WTC11 (cell line): ENCODE measurements at regions of chr7 and their contacts with region 1.

Region 1: DNA sequence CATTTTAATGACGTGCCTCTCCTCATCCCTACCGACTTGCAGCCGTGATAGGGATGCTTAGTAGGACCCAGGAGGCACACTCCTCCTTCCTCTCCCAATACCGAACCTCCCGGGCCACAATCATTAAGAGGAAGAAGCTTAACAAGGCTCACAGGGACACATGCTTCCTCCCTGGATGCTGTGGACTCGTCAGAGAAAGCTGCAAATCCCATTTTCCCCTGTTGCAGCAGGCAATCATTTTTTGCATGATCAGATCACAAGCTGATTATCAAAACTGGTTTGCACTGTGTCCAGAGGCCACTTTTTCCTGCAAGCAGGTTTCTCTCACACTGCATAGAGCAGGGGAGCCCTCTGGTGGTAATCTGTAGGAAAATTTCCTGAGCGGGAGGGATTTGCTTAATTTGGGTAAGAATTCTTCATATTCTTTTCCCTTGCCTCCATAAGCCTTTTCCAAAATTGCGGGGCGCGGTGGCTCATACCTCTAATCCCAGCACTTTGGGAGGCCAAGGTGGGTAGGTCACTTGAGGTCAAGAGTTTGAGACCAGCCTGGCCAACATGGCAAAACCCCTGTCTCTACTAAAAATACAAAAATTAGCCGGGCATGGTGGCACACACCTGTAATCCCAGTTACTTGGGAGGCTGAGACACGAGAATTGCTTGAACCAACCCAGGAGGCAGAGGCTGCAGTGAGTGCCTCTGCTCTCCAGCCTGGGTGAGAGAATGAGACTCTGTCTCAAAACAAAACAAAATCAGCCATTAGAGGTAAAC is 16.1 kb upstream of the LAMB4 start:
- DNase-seq: peak; percentile 71
- ATAC-seq: peak; percentile 89
- H3K4me3 Mint-ChIP-seq: no peak overlapping the region
- H3K27ac Mint-ChIP-seq: no peak overlapping the region
- H3K4me1 Mint-ChIP-seq: no peaks in the 10 kb centered on the region
- H3K27me3 Mint-ChIP-seq: no peaks in the 10 kb centered on the region
- CTCF ChIP-seq: peak; percentile 76

Region 2: GRCh38 chr7:107879400-107880035 is 266.7 kb before region 1 on chr7:
- CTCF ChIA-PET with region 1: interaction called, 14 read pairs
- POLR2A ChIA-PET with region 1: interaction called, 3 read pairs
- DNase-seq: no peak
- ATAC-seq: peak; percentile 79
- H3K4me3 Mint-ChIP-seq: no peak overlapping the region
- H3K27ac Mint-ChIP-seq: no peak overlapping the region
- H3K4me1 Mint-ChIP-seq: no peaks in the 10 kb centered on the region; the same call in 1 of the 2 replicates
- H3K27me3 Mint-ChIP-seq: peaks cover 4% of the 10 kb centered on the region; the same call in 1 of the 2 replicates
- CTCF ChIP-seq: peak; percentile 38; the same call in 1 of the 2 replicates

Region 3: DNA sequence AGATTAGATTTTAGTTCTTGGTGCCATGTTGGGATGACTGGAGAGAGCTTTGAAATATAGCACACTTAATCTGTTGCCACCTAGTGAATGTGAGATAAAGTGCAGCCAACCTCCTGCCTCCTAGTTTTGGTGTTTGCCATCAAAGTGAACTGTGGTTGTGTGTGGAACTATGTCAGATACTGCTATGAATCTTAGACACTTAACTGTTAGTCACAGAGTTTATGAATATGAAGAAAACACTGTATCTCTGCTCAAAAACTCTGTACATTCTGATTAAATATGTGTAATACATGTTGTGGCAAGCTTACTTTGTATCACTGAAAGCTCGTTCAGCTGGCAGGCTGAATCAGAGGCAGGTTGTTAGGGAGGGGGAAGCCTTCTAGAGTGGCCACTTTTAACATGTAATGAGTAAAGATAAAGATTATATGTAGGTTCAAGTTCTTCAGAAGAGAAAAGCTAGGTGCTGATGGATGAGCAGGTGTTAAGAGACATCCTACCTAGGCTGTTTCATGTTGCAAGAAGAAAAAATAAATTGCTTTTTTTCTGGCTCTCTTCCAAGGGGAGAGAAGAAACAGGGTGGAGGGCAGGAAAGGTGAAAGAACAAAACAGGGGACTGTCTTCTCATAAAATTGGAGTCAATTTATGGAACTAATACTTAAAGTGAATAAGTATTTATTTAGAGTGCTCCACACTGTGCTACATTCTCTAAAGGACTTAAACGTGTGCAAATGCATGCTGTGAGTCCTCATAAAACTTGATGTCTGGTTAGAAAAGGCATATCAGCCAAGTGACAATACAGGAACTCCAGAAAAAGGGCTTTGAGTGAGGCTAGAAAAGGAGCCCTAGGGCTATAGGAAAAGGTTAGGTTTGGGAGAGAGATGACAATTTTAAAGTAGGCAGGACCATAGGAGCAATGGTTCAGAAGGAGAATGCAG is 129.1 kb before region 1 on chr7:
- CTCF ChIA-PET with region 1: interaction called, 11 read pairs
- POLR2A ChIA-PET with region 1: no interaction called
- DNase-seq: no peak
- ATAC-seq: peak; percentile 90
- H3K4me3 Mint-ChIP-seq: no peak overlapping the region
- H3K27ac Mint-ChIP-seq: no peak overlapping the region
- H3K4me1 Mint-ChIP-seq: peaks cover 3% of the 10 kb centered on the region; the same call in 1 of the 2 replicates
- H3K27me3 Mint-ChIP-seq: no peaks in the 10 kb centered on the region
- CTCF ChIP-seq: 0 out of 2 replicates have a peak, but pooled peaks have one; percentile 16

Region 4: DNA sequence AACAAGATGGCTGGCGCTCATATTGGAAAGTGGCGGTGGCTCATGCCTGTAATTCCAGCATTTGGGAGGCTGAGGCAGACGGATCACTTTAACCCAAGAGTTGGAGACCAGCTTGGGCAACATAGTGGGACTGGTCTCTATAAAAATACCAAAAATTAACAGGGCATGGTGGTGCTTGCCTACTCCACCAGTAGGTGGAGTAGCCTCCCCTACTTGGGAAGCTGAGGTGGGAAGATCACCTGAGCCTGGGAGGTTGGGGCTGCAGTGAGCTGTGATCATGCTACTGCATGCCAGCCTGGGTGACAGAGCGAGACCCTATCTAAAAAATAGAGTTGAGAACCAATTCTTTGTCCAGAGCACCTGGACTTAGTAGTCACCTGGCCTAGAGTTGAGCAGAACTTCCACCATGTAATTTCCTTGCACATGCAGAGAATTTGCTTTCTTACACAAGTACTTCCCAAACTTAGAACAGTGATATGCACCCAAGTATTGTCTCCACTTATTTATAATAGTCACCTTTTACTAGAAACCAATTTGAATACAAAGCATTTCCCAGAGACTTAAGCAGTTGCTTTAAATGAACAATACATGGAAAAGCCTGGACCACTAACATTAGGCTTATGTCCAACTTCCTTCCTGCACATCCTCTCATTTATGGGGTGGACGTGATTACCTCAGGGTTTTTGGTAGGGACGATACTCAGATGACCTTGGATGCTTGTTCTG is 32.0 kb before region 1 on chr7:
- CTCF ChIA-PET with region 1: interaction called, 65 read pairs
- POLR2A ChIA-PET with region 1: interaction called, 3 read pairs
- DNase-seq: peak; percentile 59
- ATAC-seq: peak; percentile 98
- H3K4me3 Mint-ChIP-seq: no peak overlapping the region
- H3K27ac Mint-ChIP-seq: no peak overlapping the region
- H3K4me1 Mint-ChIP-seq: no peaks in the 10 kb centered on the region
- H3K27me3 Mint-ChIP-seq: no peaks in the 10 kb centered on the region
- CTCF ChIP-seq: peak; percentile 69

Region 5: GRCh38 chr7:108132551-108133265 is 13.5 kb before region 1 on chr7:
- CTCF ChIA-PET with region 1: interaction called, 18 read pairs
- POLR2A ChIA-PET with region 1: no interaction called
- DNase-seq: no peak
- ATAC-seq: peak; percentile 74
- H3K4me3 Mint-ChIP-seq: no peak overlapping the region
- H3K27ac Mint-ChIP-seq: no peak overlapping the region
- H3K4me1 Mint-ChIP-seq: peaks cover 8% of the 10 kb centered on the region
- H3K27me3 Mint-ChIP-seq: no peaks in the 10 kb centered on the region
- CTCF ChIP-seq: no peak